ENCODE measurements at regions of chr18 and their contacts with region 1.

Region 1: GRCh38 chr18:78587096-78587495 is 392.5 kb upstream of the SALL3 start:
- DNase-seq: no peak
- ATAC-seq: no peak
- H3K4me3 ChIP-seq: no peak overlapping the region
- H3K27ac ChIP-seq: no peak overlapping the region
- H3K4me1 ChIP-seq: no peaks in the 10 kb centered on the region
- H3K27me3 ChIP-seq: peaks cover 0 to 6% (median 0%) of the 10 kb centered on the region in 7 donors
- CTCF ChIP-seq: no peak

Region 2: GRCh38 chr18:78423811-78424210 is 163.3 kb before region 1 on chr18:
- intact Hi-C with region 1: no loop called
- DNase-seq: no peak
- ATAC-seq: no peak
- H3K4me3 ChIP-seq: no peak overlapping the region
- H3K27ac ChIP-seq: no peak overlapping the region
- H3K4me1 ChIP-seq: no peaks in the 10 kb centered on the region
- H3K27me3 ChIP-seq: peaks cover 0 to 30% (median 5%) of the 10 kb centered on the region in 7 donors
- CTCF ChIP-seq: no peak

Region 3: GRCh38 chr18:78525366-78526111 is 61.6 kb before region 1 on chr18:
- intact Hi-C with region 1: loop called in 1 of 10 experiments (anchors 10 kb)
- DNase-seq: no peak
- ATAC-seq: no peak
- H3K4me3 ChIP-seq: no peak overlapping the region
- H3K27ac ChIP-seq: no peak overlapping the region
- H3K4me1 ChIP-seq: peaks cover 0 to 14% (median 8%) of the 10 kb centered on the region in 9 donors
- H3K27me3 ChIP-seq: peaks cover 0 to 15% (median 6%) of the 10 kb centered on the region in 7 donors
- CTCF ChIP-seq: no peak

Region 4: GRCh38 chr18:78643004-78643403 is 55.9 kb after region 1 on chr18:
- intact Hi-C with region 1: loop called in 2 of 10 experiments (anchors 2 to 10 kb)
- DNase-seq: no peak
- ATAC-seq: no peak
- H3K4me3 ChIP-seq: no peak overlapping the region
- H3K27ac ChIP-seq: peak overlapping the region in 1 of 10 donors; percentile 47
- H3K4me1 ChIP-seq: peaks cover 0 to 29% (median 0%) of the 10 kb centered on the region in 9 donors
- H3K27me3 ChIP-seq: peaks cover 0 to 42% (median 7%) of the 10 kb centered on the region in 7 donors
- CTCF ChIP-seq: no peak

Measured in heart right ventricle (tissue), 16 donors.